MCF 10A (cell line): ENCODE measurements at regions of chr7 and their contacts with region 1.

Region 1: DNA sequence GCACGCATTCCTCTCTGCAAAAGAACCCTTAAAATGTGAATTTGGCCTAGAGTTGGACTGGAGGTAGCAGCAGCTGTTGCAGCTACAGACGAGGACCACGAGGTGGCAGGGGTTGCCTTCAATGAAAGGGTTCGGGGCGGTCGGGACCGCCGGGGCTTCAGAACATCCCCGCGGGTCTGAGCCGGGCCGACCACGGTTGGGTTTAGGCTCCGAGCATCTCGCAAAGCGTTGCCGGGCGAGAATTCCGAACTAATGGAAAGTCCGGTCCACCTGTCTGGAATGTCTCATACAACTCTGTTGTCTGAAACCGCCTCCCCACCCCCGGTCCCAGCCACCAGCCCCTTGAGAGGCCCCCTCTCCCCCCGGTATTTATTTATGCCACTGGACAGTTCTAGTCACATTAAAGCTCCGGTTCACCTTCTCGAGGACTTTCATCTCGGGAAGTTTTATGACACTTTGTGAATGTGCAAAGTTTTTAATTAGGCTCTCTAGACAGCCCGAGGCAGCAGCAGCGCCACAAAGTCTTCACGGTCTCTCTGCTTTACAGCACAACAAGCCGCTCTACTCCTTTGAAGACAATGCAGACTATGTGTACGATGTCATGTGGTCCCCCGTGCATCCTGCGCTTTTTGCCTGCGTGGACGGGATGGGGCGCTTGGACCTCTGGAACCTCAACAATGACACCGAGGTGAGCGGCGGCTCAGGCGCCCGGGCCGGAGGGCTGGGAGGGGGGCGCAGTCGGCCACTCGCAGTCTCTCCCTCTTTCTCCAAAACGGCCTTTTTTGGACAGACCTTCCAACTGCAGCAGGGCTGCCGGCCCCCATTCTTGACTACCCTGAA is 246.2 kb downstream of the SLC25A13 start:
- DNase-seq: peak; percentile 57
- H3K4me3 Mint-ChIP-seq: peak overlapping the region; percentile 62
- H3K27ac Mint-ChIP-seq: no peak overlapping the region
- H3K4me1 Mint-ChIP-seq: peaks cover 7% of the 10 kb centered on the region
- H3K27me3 Mint-ChIP-seq: peaks cover 75% of the 10 kb centered on the region
- CTCF ChIP-seq: peak; percentile 91

Region 2: GRCh38 chr7:96118449-96119001 is 42.8 kb after region 1 on chr7:
- CTCF ChIA-PET with region 1: no interaction called
- POLR2A ChIA-PET with region 1: no interaction called
- intact Hi-C with region 1: no loop called
- DNase-seq: no peak
- H3K4me3 Mint-ChIP-seq: no peak overlapping the region
- H3K27ac Mint-ChIP-seq: no peak overlapping the region
- H3K4me1 Mint-ChIP-seq: no peaks in the 10 kb centered on the region
- H3K27me3 Mint-ChIP-seq: no peaks in the 10 kb centered on the region
- CTCF ChIP-seq: no peak

Region 3: DNA sequence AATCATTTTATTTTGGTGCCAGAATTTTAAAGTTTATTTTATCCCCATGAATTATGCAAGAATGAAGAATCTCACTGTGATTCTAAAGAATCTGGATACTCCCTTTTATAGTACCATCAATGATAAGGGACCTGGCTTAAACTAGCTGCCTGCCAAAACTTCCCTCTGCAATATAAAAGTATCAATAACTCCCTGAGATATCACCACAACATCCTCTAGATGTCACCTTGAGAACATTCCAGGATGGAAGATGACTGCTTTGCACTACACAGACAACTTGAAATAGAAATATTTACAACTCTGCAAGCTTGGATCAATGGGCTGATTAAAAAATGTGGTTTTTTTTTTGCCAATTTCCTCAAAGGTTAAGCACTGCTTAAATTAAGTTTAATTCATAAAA is 104.1 kb after region 1 on chr7:
- CTCF ChIA-PET with region 1: no interaction called
- POLR2A ChIA-PET with region 1: no interaction called
- intact Hi-C with region 1: loop called (anchors 10 kb)
- DNase-seq: no peak
- H3K4me3 Mint-ChIP-seq: no peak overlapping the region
- H3K27ac Mint-ChIP-seq: no peak overlapping the region
- H3K4me1 Mint-ChIP-seq: peaks cover 14% of the 10 kb centered on the region
- H3K27me3 Mint-ChIP-seq: no peaks in the 10 kb centered on the region
- CTCF ChIP-seq: peak; percentile 15

Region 4: DNA sequence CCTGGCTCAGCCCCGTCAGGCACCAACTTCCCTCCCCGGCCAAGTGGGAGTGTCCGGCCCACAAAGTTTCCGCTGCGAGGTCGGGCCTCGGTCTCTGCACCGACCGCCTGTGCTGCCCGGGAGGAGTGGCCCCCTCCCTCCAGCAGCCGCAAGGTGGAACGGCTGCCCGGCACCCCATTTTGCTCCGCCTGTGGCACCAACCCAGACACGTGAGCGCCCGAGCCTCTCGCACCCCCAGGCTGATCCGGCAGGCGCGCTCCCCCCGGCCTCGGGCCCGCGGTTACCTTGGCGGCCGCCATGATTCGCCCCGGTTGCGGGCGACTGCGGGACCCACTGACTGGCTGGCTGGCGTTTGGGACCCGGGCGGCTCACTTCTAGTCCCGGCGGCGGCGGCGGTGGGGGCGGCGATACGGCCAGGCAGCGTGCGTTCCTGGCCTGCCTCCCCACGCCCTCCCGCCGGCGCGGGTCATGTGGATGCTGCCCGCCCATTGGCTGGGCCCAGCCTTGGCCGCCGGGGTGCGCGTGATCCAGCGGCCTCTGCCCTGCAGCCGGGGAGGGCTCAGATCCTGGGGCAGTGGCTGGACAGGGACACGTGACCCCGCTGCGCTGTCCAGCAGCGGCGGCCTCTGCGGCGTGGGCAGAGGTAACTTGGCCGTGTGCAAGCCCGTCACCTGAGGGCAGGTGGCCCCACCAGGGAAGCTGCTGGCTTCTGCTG is 246.1 kb after region 1 on chr7 and contains the start of gene SLC25A13:
- CTCF ChIA-PET with region 1: no interaction called
- POLR2A ChIA-PET with region 1: no interaction called
- intact Hi-C with region 1: loop called (anchors 5 kb)
- DNase-seq: peak; percentile 85
- H3K4me3 Mint-ChIP-seq: peak within 1 kb of the TSS; percentile 88
- H3K27ac Mint-ChIP-seq: peak within 1 kb of the TSS; percentile 90
- H3K4me1 Mint-ChIP-seq: peaks cover 16% of the 10 kb centered on the region
- H3K27me3 Mint-ChIP-seq: no peaks in the 10 kb centered on the region
- CTCF ChIP-seq: no peak
- total RNA-seq, gene SLC25A13: 23.4 and 28.6 TPM in 2 replicates

Region 5: DNA sequence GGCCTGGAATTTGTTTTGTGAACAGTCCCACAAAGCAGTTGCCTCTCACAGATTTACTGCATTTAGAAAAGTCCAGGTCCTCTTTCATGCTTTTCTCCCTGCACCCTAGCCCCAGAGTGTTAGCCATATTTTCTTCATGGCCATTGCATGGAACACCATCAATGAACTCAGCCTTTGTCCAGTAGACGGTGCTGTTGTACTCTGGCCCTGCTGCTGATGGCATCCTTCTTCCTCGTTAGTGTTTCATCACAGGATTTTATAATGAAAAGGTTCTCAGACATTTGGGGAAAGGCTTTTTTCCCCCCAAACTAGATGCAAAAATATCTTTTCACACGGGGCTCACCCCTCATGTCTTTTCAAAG is 339.2 kb after region 1 on chr7:
- CTCF ChIA-PET with region 1: interaction called, 4 read pairs
- POLR2A ChIA-PET with region 1: no interaction called
- intact Hi-C with region 1: loop called (anchors 2 kb)
- DNase-seq: peak; percentile 73
- H3K4me3 Mint-ChIP-seq: no peak overlapping the region
- H3K27ac Mint-ChIP-seq: no peak overlapping the region
- H3K4me1 Mint-ChIP-seq: no peaks in the 10 kb centered on the region
- H3K27me3 Mint-ChIP-seq: peaks cover 29% of the 10 kb centered on the region
- CTCF ChIP-seq: peak; percentile 82

Region 6: DNA sequence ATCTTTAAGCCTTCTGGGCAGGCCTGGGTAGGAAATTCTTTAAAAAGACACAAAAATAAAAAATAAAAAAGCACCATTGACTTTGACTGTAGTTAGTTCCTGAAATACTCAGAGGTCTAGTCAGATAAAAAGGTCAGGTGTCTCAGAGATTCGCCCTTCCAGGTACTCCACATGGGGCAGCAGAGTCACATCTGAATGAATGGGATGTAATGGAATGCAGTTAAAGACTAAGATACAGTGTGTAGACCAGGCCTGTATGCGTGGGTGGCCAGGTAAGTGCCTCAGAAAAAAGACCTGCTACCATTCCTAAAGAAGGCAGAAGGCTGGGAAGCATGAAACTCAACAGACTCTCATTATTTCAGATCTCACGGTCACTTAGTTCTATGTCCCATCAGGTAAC is 702.5 kb after region 1 on chr7:
- CTCF ChIA-PET with region 1: no interaction called
- POLR2A ChIA-PET with region 1: no interaction called
- intact Hi-C with region 1: loop called (anchors 10 kb)
- DNase-seq: peak; percentile 32
- H3K4me3 Mint-ChIP-seq: no peak overlapping the region
- H3K27ac Mint-ChIP-seq: no peak overlapping the region
- H3K4me1 Mint-ChIP-seq: no peaks in the 10 kb centered on the region
- H3K27me3 Mint-ChIP-seq: peaks cover 30% of the 10 kb centered on the region
- CTCF ChIP-seq: peak; percentile 20

Region 7: GRCh38 chr7:97064967-97065587 is 989.3 kb after region 1 on chr7:
- CTCF ChIA-PET with region 1: interaction called, 6 read pairs
- POLR2A ChIA-PET with region 1: no interaction called
- intact Hi-C with region 1: loop called (anchors 1 kb)
- DNase-seq: peak; percentile 67
- H3K4me3 Mint-ChIP-seq: no peak overlapping the region
- H3K27ac Mint-ChIP-seq: no peak overlapping the region
- H3K4me1 Mint-ChIP-seq: no peaks in the 10 kb centered on the region
- H3K27me3 Mint-ChIP-seq: peaks cover 50% of the 10 kb centered on the region
- CTCF ChIP-seq: peak; percentile 70